ENCODE measurements at regions of chr14 and their contacts with region 1.

Region 1: DNA sequence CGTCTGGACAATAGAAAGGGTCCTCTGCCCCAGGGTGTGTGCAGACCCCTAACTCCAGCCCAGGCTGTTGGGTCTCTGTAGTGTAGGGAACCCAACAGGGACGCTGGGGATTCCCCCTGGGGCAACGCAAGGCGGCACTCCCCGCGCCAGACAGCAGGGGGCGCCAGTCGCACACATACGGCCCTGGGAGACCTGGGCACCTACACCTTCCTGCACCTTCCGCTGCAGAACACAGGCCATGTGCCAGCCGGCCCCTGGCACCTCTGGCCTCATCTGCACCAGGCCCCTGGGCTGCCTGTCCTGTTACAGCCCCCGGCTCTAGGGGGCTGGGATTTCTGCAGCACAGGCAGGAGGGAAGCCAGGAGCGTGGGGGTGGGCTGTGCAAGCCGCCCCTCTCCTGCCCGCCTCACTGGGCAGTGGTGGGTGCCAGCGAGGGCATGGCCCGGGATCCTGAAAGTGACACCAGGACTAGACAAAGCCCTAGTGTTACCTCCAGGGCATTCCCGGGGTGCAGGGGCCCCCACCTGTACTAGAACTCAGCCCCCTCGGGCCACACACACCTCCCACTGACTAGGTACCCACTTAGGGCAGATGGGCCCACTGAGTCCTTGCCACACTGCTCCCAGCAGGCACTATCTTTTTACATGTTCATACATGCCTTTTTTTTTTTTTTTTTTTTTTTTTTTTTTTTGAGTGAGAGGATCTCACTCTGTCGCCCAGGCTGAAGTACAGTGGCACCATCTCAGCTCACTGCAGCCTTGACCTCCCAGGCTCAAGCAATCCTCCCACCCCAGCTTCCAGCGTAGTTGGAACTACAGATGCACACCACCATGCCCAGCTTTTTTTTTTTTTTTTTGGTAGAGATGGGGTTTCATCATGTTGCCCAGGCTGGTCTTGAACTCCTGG is 37.5 kb downstream of the CCNK start:
- DNase-seq: peak; percentile 23
- ATAC-seq: peak; percentile 86
- H3K4me3 ChIP-seq: no peak overlapping the region
- H3K27ac ChIP-seq: no peak overlapping the region
- H3K4me1 ChIP-seq: peaks cover 0 to 6% of the 10 kb centered on the region in 2 experiments; a peak in 2 of 4 replicates
- H3K27me3 ChIP-seq: no peaks in the 10 kb centered on the region
- CTCF ChIP-seq: peak; percentile 90 to 95 (median 93)
- POLR2A ChIP-seq: no peak
- RAD21 ChIP-seq: peak; percentile 98

Region 2: DNA sequence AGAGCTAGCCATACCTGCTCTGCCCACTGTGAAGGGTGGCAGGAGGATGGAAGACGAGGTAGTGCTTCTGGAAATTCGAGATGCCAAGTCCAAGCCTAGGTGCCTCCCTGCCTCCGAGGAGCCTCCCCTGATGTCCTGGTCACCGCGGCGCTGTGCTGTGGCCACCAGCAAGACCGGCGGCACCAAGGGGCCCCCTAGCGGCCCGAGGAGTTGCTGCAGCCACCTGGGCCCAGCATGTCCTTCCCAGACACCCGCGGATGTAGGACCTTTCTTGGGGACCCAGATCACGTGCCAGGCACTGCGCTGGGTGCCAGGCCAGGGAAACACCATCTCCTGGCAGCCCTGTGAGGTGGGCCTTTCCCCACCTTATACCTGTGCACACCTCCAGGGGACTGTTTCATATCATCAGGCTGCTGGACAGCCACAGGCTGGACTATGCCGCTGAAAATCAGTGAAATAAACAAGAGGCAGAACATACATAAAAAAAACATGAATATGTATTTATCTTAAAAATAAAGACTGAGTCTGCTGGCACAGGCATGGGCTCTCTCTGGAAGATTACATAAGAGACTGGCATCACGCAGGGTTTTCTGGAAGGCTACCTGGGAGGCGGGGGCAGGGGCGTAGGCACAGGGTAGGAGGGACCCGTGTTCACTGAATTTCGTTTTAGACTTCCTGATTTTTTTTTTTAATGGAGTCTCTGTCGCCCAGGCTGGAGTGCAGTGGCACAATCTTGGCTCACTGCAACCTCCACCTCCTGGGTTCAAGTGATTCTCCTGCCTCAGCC is 110.3 kb after region 1 on chr14:
- CTCF ChIA-PET with region 1: interaction called, 3 read pairs
- POLR2A ChIA-PET with region 1: no interaction called
- RAD21 ChIA-PET with region 1: interaction called, 3 to 4 read pairs
- intact Hi-C with region 1: loop called (anchors 1 kb)
- DNase-seq: peak; percentile 61
- ATAC-seq: peak; percentile 98
- H3K4me3 ChIP-seq: peak overlapping the region; percentile 29 to 46
- H3K27ac ChIP-seq: no peak overlapping the region
- H3K4me1 ChIP-seq: peaks cover 6 to 15% of the 10 kb centered on the region in 2 experiments; a peak in 3 of 4 replicates
- H3K27me3 ChIP-seq: no peaks in the 10 kb centered on the region
- CTCF ChIP-seq: peak; percentile 97 to 98 (median 98)
- POLR2A ChIP-seq: no peak
- RAD21 ChIP-seq: peak; percentile 99

Region 3: GRCh38 chr14:99683619-99684355 is 165.1 kb after region 1 on chr14 and contains the start of gene CYP46A1:
- CTCF ChIA-PET with region 1: interaction called, 3 read pairs
- POLR2A ChIA-PET with region 1: no interaction called
- RAD21 ChIA-PET with region 1: no interaction called
- intact Hi-C with region 1: loop called (anchors 1 kb)
- DNase-seq: peak; percentile 97
- ATAC-seq: peak; percentile 88
- H3K4me3 ChIP-seq: peak within 1 kb of the TSS; percentile 65 to 96
- H3K27ac ChIP-seq: peak within 1 kb of the TSS; percentile 76
- H3K4me1 ChIP-seq: peaks cover 4 to 26% of the 10 kb centered on the region in 2 experiments; a peak in 2 of 4 replicates
- H3K27me3 ChIP-seq: no peaks in the 10 kb centered on the region
- CTCF ChIP-seq: no peak
- POLR2A ChIP-seq: no peak
- RAD21 ChIP-seq: no peak
- total RNA-seq, gene CYP46A1: 0.76 TPM

Measured in HCT116 (cell line).